Psoas muscle (tissue), 8 donors: ENCODE measurements at regions of chr12 and their contacts with region 1.

Region 1: DNA sequence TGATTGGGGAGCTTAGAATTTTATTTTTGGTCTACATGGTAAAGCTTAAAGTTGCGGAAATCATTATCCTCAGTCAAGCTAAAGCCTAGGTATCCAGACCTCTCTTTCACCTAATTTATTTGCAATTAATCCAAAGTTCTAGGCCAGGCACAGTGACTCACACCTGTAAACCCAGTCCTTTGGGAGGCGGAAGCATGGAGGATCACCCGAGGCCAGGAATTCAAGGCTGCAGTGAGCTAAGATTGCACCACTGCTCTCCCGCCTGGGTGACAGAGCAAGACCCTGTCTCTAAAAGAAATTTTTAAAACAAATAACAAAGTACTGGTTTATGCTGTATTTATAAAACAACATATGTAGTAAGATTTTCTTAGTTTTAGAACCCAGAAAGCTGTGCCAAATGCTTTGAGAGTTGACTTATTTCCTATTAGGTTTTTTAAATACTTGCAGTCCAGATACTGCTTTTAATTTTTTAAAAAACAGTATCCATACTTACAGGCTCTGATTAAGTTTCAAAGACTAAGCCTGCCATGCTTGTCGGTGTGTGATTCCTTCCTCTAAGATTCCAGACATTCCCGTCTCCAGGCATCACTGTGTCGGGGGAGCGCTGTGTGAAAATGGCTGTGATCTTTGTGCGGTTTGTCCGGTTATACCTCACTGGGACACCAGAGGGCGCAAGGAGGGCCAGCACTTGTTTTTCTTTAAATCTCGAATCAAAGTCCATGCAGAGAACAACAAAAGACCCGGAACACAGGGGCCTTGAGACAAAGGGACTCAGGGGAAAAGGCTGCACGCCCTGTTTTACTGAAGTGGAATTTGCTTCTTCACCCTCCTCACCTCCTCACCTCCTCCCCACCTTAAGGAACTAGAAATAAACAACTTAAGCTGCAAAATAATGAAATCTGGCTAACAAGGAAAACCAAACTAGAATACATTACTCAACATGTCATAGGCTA is 24.6 kb upstream of the TMPO start:
- DNase-seq: peak; percentile 81 to 88
- ATAC-seq: peak; percentile 78 to 92 (median 84)
- H3K4me3 ChIP-seq: no peak overlapping the region
- H3K27ac ChIP-seq: no peak overlapping the region
- H3K4me1 ChIP-seq: no peaks in the 10 kb centered on the region
- H3K27me3 ChIP-seq: no peaks in the 10 kb centered on the region
- CTCF ChIP-seq: peak; percentile 83

Region 2: DNA sequence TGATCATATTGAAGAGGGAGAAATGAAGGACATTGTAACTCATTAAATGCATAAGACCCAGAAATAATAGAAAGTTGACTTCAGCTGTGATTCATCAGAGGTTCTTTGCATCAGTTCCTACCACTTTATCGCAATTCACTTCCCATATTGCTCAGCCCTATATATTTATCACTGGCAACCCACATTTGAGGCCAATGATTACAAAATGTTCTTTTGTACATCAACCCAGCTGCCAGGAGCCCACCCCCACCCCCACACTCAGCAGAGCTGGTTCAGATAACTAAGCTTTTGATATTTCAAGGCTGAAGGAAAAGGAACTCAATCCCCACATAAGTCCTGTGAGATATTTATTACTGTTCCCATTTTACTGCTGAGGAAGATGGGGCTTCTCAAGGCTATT is 26.6 kb before region 1 on chr12:
- intact Hi-C with region 1: no loop called
- DNase-seq: no peak
- ATAC-seq: no peak
- H3K4me3 ChIP-seq: no peak overlapping the region
- H3K27ac ChIP-seq: no peak overlapping the region
- H3K4me1 ChIP-seq: no peaks in the 10 kb centered on the region
- H3K27me3 ChIP-seq: no peaks in the 10 kb centered on the region
- CTCF ChIP-seq: no peak

Region 3: GRCh38 chr12:98532681-98533304 is 42.0 kb after region 1 on chr12:
- intact Hi-C with region 1: loop called in 1 of 2 experiments (anchors 5 kb)
- DNase-seq: no peak
- ATAC-seq: peak; percentile 59 to 79 (median 70)
- H3K4me3 ChIP-seq: peak overlapping the region; percentile 24
- H3K27ac ChIP-seq: peak overlapping the region; percentile 72
- H3K4me1 ChIP-seq: peaks cover 23% of the 10 kb centered on the region
- H3K27me3 ChIP-seq: no peaks in the 10 kb centered on the region
- CTCF ChIP-seq: peak; percentile 66

Region 4: GRCh38 chr12:98644711-98645402 is 154.1 kb after region 1 on chr12 and contains the starts of genes APAF1 and IKBIP:
- intact Hi-C with region 1: loop called in 1 of 2 experiments (anchors 5 kb)
- DNase-seq: peak; percentile 98
- ATAC-seq: peak; percentile 97 to 99 (median 98)
- H3K4me3 ChIP-seq: peak within 1 kb of the TSS; percentile 74
- H3K27ac ChIP-seq: peak within 1 kb of the TSS; percentile 74
- H3K4me1 ChIP-seq: peaks cover 17% of the 10 kb centered on the region
- H3K27me3 ChIP-seq: no peaks in the 10 kb centered on the region
- CTCF ChIP-seq: no peak
- total RNA-seq, gene APAF1: 4.3 to 6.8 (median 5.3) TPM
- total RNA-seq, gene IKBIP: 2.1 to 6.0 (median 3.4) TPM